ENCODE measurements at regions of chr17 and their contacts with region 1.

Region 1: DNA sequence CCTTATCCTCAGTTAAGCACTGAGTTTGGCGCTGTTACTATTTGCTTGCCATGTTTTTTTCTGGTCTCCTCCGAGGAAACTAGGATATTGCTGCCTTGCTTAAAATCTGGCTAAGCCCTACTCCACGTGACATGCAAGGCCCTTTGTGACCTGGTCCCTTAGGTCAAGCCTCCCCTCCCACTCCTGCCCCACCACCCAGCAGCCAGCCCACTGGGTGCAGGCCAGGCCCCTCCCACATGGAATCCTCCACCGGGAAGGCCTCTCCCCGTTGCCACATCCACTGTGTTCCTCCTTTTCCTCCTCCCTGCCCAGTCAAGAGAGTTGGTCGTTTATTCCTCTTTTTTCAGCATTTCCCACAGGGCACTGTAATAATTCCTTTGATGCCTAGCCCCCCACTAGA is 16.2 kb downstream of the PSMD3 start:
- DNase-seq: no peak
- H3K4me3 ChIP-seq: no peak overlapping the region
- CTCF ChIP-seq: no peak

Region 2: DNA sequence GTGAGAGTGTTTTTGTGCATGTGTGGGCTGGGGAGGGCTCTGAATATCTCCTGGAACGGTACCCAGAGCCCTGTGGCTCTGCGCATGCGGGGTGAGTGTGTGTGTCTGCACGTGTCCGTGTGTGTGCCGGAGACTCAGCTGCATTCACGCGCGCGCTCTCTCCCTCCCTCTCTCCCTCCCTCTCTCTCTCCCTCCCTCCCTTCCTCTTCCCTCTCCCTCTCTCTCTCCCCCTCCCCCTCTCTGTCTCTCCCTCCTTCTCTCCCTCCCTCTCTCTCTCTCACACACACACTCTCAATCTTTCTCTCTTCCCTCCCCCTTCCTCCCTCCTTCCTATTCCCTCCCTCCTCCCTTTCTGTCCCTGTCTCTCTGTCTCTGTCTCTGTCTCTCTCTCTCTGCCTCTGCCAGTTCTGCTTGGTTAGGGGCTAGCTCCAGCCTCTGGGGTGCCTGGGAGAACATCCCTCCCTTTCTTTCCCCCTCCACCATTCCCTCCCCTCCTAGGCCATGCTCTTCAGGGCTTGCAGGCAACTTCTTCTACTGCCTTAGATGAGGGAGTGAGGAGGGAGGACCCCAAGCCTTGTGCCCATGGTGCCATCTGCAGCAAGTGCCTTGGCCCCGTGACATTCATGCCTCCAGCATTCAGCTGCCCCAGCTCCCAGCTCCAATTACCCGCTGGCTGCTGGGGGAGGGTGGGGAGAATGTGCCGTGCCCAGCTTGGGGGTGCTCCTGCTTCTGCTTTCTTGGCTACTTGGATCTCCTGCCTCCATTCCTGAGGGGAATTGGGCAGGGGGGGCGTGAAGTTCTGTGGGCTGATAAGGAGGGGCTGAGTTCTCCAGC is 72.3 kb after region 1 on chr17:
- in situ Hi-C with region 1: loop called (anchors 5 kb)
- DNase-seq: no peak
- H3K4me3 ChIP-seq: peak overlapping the region; percentile 12
- CTCF ChIP-seq: no peak

Region 3: DNA sequence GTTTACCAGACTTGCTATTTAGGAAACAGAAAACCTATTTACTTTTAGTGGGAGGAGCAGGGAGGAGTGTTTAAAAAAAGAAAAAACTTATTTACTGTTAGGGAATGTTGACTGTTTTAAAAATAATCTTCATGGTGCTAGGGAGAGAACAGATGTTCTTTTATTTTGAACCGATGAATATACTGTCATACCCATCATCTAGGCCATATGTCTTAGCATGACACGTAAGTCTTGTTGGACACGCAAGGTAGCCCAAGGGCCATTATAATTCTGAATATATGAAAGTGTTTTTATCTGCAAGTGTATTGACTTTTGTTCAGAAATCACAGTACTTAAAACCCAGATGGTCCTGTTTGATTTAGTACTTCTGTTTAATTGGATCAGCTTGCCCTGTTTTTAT is 233.9 kb after region 1 on chr17:
- in situ Hi-C with region 1: no loop called
- DNase-seq: no peak
- H3K4me3 ChIP-seq: no peak overlapping the region
- CTCF ChIP-seq: no peak